Activated CD4-positive, alpha-beta T cell treated with anti-CD3 and anti-CD28 coated beads, Interleukin-2, amount 10 ng/mL, durations not matched to agents 24 days and 14 days (primary cell): ENCODE measurements at regions of chr3 and their contacts with region 1.

Region 1: GRCh38 chr3:60365360-60365759 is 885.9 kb downstream of the FHIT start:
- DNase-seq: no peak
- H3K4me3 Mint-ChIP-seq: no peak overlapping the region
- H3K27ac Mint-ChIP-seq: peak overlapping the region; percentile 51
- H3K4me1 Mint-ChIP-seq: peaks cover 18% of the 10 kb centered on the region
- H3K27me3 Mint-ChIP-seq: no peaks in the 10 kb centered on the region

Region 2: GRCh38 chr3:59968513-59969045 is 396.8 kb before region 1 on chr3:
- intact Hi-C with region 1: no loop called
- DNase-seq: no peak
- H3K4me3 Mint-ChIP-seq: no peak overlapping the region
- H3K27ac Mint-ChIP-seq: no peak overlapping the region
- H3K4me1 Mint-ChIP-seq: peaks cover 3% of the 10 kb centered on the region
- H3K27me3 Mint-ChIP-seq: no peaks in the 10 kb centered on the region

Region 3: GRCh38 chr3:60301142-60301541 is 64.2 kb before region 1 on chr3:
- intact Hi-C with region 1: loop called (anchors 5 kb)
- DNase-seq: no peak
- H3K4me3 Mint-ChIP-seq: no peak overlapping the region
- H3K27ac Mint-ChIP-seq: no peak overlapping the region
- H3K4me1 Mint-ChIP-seq: peaks cover 16% of the 10 kb centered on the region
- H3K27me3 Mint-ChIP-seq: no peaks in the 10 kb centered on the region

Region 4: DNA sequence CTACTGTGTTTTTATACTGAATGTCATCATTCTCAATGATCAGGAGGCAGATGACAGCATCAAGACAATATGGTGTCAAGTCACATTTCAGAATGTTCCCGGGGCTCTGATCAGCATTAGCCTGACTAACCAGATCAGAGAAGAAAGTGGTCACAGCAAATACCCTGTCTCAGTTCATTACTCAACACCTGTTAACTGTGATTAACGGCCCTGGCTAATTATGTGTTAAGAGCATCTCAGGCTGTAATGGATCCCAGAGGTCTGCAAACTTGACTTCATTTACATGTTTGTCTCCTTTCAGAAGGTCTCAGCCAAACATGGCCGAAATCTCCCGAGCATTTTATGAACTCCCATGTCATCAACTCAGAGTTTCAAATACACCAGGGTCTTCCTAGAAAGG is 52.2 kb after region 1 on chr3:
- intact Hi-C with region 1: no loop called
- DNase-seq: no peak
- H3K4me3 Mint-ChIP-seq: no peak overlapping the region
- H3K27ac Mint-ChIP-seq: no peak overlapping the region
- H3K4me1 Mint-ChIP-seq: no peaks in the 10 kb centered on the region
- H3K27me3 Mint-ChIP-seq: no peaks in the 10 kb centered on the region

Region 5: DNA sequence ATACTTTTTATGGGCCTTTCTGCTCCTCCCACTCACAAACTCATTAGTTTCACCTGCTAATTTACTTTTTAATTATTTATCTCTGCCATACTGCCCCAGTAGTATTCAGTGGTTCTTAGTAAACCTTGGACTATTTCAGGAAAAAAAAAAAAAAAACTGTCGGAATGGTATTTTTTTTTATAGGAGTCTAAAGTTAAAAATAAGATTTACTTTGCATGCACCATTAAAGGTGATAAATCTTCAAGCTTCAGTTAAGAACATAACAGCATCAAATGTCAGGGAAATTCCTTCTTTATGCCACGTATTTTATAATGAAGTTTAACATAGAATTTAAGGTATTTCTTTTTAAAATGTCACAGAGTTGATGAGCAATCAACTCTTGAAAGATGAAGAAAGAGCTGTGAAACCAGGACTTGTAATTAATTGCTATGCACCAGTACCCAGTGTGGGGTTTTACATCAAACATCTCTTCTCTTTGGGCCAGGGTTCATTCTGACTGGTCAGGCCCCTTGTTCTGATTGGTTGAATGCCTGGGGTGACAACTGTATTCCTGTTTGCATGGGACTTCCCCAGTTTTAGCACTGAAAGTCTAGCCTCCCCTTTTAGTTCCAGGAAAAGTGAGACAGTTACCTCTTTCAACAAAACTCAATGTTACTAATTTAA is 1155.7 kb after region 1 on chr3:
- intact Hi-C with region 1: loop called (anchors 10 kb)
- DNase-seq: peak; percentile 84
- H3K4me3 Mint-ChIP-seq: peak overlapping the region; percentile 48
- H3K27ac Mint-ChIP-seq: peak overlapping the region; percentile 80
- H3K4me1 Mint-ChIP-seq: peaks cover 37% of the 10 kb centered on the region
- H3K27me3 Mint-ChIP-seq: no peaks in the 10 kb centered on the region